ENCODE measurements at regions of chr22 and their contacts with region 1.

Region 1: GRCh38 chr22:31345331-31346254 is 553 bp downstream of the PATZ1 start:
- DNase-seq: peak; percentile 84
- H3K4me3 ChIP-seq: peak overlapping the region; percentile 65
- H3K27ac ChIP-seq: peak overlapping the region; percentile 78
- H3K4me1 ChIP-seq: peaks cover 27% of the 10 kb centered on the region
- H3K27me3 ChIP-seq: no peaks in the 10 kb centered on the region
- CTCF ChIP-seq: peak; percentile 65

Region 2: DNA sequence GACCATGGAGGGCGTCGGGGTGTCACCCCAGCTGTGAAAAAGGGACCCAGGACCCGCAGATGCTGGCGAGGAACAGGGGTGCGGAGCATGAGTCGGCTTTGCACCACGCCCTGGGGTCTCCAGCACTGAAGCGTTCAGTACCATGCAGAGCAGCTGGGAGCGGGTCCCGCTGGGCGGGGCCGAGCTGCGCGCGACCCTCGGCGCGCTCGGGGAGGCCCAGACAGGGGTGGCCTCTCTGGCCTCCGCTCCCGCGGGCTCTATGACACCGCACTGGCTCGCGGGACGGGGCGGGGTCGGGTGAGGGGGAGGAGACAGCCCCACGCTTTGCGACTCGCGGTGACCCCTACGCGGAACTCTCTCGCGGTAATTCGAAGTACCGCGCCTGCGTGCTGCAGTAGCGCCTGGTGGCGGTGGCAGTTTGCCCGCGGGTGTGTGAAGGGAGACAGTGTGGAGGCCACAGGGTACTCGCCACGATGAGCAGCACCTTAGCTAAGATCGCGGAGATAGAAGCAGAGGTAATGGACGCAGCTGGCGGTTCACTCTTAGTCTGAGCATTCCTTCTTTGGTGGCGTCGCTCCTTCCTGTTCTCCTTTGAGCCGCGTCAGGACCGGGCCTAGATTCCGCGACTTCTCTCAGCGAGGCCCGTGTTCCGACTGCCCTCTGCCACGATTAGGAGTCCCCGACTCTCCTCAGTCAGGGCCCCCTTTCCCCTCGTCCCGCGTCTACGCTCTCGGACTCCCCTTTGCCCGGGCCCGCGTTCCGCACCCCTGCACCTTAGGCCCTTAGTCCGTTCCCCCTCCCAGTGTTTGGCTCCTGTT is 53.8 kb after region 1 on chr22 and contains the start of gene DRG1:
- intact Hi-C with region 1: loop called (anchors 5 kb)
- DNase-seq: peak; percentile 98
- H3K4me3 ChIP-seq: peak within 1 kb of the TSS; percentile 80
- H3K27ac ChIP-seq: peak within 1 kb of the TSS; percentile 81
- H3K4me1 ChIP-seq: no peaks in the 10 kb centered on the region
- H3K27me3 ChIP-seq: no peaks in the 10 kb centered on the region
- CTCF ChIP-seq: no peak
- total RNA-seq, gene DRG1: 43.8 to 48.9 TPM